ENCODE measurements at regions of chr9 and their contacts with region 1.

Region 1: DNA sequence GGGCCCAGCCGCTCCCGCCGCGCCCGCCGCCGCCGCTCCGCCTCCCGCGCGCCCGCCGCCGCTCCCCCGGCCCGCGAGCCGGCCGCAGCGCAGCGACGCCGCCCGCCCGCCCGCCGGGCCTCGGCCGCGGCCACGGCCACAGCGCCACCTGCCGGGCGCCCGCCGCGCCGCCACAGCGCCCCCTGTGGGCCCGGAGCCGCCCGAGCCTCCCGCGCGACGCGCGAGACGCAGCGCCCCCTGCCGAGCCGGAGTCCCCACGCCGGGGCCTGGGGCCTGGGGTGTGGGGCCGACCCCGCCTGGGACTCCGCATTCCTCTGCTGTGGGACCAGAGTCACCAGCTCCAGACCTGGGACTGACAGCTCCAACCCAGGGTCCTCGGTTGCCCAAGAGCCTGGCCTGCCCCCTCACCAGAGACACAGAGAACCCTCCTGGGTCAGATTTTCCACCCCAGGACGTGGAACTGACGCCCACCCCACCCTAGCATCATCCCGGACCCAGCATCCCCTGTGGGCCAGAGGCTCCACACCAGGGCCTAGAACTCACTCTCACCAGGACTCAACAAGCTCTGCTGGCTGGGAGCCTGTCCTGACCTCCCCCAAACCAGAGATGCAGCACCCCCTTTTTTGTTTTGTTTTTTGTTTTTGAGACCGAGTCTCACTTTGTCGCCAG is at the start of gene RAPGEF1:
- DNase-seq: peak; percentile 78
- H3K4me3 Mint-ChIP-seq: peak within 1 kb of the TSS; percentile 88
- H3K27ac Mint-ChIP-seq: peak within 1 kb of the TSS; percentile 88
- H3K4me1 Mint-ChIP-seq: peaks cover 59% of the 10 kb centered on the region
- H3K27me3 Mint-ChIP-seq: no peaks in the 10 kb centered on the region
- total RNA-seq, gene RAPGEF1: 55.9 to 59.9 TPM

Region 2: GRCh38 chr9:131585375-131585774 is 154.7 kb before region 1 on chr9:
- CTCF ChIA-PET with region 1: interaction called, 52 read pairs
- intact Hi-C with region 1: no loop called
- DNase-seq: peak; percentile 74
- H3K4me3 Mint-ChIP-seq: no peak overlapping the region
- H3K27ac Mint-ChIP-seq: peak overlapping the region; percentile 84
- H3K4me1 Mint-ChIP-seq: peaks cover 26% of the 10 kb centered on the region
- H3K27me3 Mint-ChIP-seq: no peaks in the 10 kb centered on the region

Region 3: DNA sequence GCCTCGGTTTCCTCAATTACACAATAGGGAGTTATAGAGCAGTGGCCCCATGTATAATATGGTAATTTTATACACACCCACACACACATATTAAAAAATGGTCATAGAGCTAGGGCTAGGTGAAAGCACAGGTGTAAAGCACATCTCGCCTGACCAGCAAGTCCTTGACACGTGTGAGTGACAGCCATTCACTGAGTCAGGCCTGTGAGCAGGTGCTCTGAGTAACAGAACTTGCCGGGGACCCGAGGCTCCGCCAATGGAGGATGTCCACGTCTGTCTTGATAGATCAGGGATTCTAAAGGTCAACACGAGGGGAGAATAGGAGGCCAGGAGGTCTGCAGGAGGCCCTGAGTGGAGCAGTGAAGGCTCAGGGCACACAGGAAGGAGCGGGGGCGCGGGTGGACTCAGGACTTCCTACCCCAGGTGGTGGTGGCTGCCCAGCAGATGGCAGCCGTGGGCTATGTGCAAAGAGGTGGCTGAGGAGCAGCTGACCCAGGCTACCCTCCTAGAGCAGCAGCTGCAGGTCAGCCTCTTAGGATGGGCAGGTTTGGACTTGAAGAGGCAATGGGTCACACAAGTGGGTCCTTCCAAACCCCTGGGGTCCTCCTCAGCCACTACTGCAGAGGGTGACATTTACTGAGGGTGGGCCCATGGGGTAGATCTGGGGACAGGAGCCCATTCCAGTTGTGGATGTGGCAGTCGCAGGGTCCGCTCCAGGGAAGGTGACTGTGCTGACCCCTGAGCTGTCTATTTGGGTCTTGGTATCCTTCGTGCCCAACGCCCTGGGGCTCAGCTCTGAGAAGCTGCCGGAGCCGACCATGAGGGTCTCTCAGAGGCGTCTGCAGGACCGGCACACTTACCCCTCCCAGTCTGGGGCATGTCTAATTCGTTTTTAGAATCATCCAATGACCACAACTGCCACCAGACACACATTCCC is 148.9 kb before region 1 on chr9:
- CTCF ChIA-PET with region 1: interaction called, 52 read pairs
- intact Hi-C with region 1: loop called (anchors 1 kb)
- DNase-seq: peak; percentile 86
- H3K4me3 Mint-ChIP-seq: no peak overlapping the region
- H3K27ac Mint-ChIP-seq: peak overlapping the region; percentile 33
- H3K4me1 Mint-ChIP-seq: peaks cover 17% of the 10 kb centered on the region
- H3K27me3 Mint-ChIP-seq: no peaks in the 10 kb centered on the region

Region 4: DNA sequence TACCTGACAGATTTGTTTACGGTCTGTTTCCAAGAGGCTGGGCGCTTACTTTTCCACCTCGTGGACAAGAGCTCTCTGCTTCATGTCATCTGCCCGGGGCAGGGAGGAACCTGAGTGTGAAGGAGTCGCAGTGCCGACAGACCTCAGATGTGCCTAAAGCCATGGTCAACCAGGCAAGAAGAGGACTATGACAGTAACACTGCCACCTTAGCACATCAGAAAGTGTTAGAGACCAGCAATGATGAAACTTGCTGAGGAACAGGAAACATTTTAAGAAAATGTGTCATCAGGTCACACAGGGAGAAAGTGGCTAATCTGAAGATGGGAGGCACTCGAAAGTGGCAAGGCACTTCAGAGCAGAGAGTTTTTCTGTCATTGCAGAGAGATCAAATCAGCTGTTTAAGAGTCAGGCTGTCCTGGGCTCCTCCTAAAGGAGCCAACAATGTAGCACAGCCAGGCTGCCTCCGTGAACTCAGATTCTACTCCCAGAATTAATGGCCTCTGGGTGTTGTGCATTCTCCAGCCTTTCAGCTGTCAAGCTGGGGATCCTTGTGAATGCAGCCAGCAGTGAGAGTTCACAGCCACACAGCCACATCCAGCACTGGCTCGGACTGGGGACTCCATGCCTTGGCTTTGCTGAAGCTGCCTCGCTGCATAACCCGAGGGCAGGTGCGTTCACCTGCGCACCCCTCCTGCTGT is 94.9 kb before region 1 on chr9:
- CTCF ChIA-PET with region 1: interaction called, 13 read pairs
- intact Hi-C with region 1: no loop called
- DNase-seq: peak; percentile 47
- H3K4me3 Mint-ChIP-seq: no peak overlapping the region
- H3K27ac Mint-ChIP-seq: peak overlapping the region; percentile 68
- H3K4me1 Mint-ChIP-seq: peaks cover 52% of the 10 kb centered on the region
- H3K27me3 Mint-ChIP-seq: no peaks in the 10 kb centered on the region

Region 5: GRCh38 chr9:131678499-131679111 is 61.5 kb before region 1 on chr9:
- CTCF ChIA-PET with region 1: interaction called, 18 read pairs
- intact Hi-C with region 1: no loop called
- DNase-seq: peak; percentile 92
- H3K4me3 Mint-ChIP-seq: peak overlapping the region; percentile 55
- H3K27ac Mint-ChIP-seq: peak overlapping the region; percentile 93
- H3K4me1 Mint-ChIP-seq: peaks cover 67% of the 10 kb centered on the region
- H3K27me3 Mint-ChIP-seq: no peaks in the 10 kb centered on the region

Region 6: GRCh38 chr9:132032238-132032950 is 292.3 kb after region 1 on chr9:
- CTCF ChIA-PET with region 1: no interaction called
- intact Hi-C with region 1: no loop called
- DNase-seq: no peak
- H3K4me3 Mint-ChIP-seq: no peak overlapping the region
- H3K27ac Mint-ChIP-seq: no peak overlapping the region
- H3K4me1 Mint-ChIP-seq: peaks cover 39% of the 10 kb centered on the region
- H3K27me3 Mint-ChIP-seq: no peaks in the 10 kb centered on the region